A549 (cell line): ENCODE measurements at regions of chr17 and their contacts with region 1.

Region 1: DNA sequence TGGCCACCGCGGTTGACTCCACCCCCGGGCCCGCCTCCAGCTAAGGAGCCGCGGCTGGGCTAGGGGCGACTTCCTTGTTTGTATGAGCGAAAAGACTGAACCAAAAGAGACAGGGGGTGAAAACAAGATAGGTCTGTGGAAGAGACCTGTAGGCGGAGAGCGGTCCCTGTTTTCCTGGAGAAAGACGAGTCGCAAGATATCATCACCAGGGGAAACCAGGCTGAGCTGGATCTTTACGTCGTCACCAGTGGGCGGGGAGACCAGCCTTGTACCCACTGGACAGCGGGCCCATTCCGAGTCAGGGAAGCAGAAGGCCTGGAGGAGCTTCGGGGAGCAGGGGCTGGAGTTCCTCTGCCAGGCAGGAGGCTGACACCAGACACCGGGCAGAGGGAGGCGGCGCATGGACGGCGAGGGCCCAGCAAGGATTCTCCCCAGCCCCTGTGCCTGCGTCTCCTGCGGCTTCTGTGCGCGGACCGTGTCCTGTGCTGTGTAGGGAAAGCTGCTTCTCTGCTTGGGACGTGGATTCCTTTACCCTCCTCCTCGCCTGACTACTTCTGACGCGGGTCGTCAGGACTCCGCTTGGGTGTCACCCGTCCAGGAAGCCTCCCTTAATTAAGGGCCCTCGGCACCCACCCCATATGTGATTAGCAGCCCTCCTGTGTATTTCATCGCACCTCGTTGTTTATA is 10.3 kb upstream of the ARL4D start:
- DNase-seq: peak; percentile 87 to 95
- ATAC-seq: peak; percentile 92
- H3K4me3 ChIP-seq: peak overlapping the region; percentile 67
- H3K27ac ChIP-seq: peak overlapping the region; percentile 83 to 93
- H3K4me1 ChIP-seq: peaks cover 11% of the 10 kb centered on the region
- CTCF ChIP-seq: no peak
- EP300 ChIP-seq: no peak
- POLR2A ChIP-seq: peak; percentile 94
- RAD21 ChIP-seq: no peak

Region 2: DNA sequence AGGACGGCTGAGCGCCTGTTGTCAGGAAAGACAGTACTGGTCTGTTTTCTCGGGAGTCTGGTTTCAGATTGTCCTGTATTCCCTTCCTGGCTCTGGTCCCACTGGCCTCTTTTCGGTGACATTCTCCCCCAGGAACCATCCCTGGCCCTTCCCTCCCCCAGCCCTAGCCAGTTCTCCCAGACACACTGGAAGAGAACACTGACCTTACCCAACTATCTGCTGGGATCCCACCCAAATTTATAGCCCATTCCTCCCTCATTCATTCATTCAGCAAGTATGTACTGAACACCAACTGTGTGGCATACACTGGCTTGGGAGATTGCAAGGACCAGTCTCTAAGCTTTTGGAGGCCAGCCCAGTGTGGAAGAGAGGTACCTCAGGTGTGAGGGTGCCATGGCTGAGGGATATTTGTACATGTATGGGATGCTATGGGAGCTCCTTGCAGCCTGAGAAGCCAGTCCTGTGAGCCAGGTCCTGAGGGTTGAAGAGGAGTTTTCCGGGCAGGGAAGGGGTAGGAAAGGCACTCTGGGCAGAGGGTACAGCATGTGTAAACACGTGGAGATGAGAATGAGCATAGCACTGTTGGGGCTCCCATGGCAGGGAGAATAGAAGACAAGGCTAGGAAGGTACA is 358.2 kb before region 1 on chr17:
- CTCF ChIA-PET with region 1: no interaction called
- POLR2A ChIA-PET with region 1: no interaction called
- DNase-seq: no peak
- ATAC-seq: no peak
- H3K4me3 ChIP-seq: no peak overlapping the region
- H3K27ac ChIP-seq: 0 out of 6 replicates have a peak overlapping the region, but pooled peaks of 1 of the 2 experiments have one; percentile 7
- H3K4me1 ChIP-seq: peaks cover 7% of the 10 kb centered on the region; the same call in 2 of the 3 replicates
- CTCF ChIP-seq: no peak
- EP300 ChIP-seq: no peak
- POLR2A ChIP-seq: no peak
- RAD21 ChIP-seq: no peak

Region 3: GRCh38 chr17:43211480-43212402 is 176.8 kb before region 1 on chr17 and contains the start of gene TMEM106A:
- CTCF ChIA-PET with region 1: no interaction called
- POLR2A ChIA-PET with region 1: no interaction called
- DNase-seq: peak; percentile 84 to 97
- ATAC-seq: peak; percentile 90 to 92
- H3K4me3 ChIP-seq: peak within 1 kb of the TSS; percentile 51
- H3K27ac ChIP-seq: peak within 1 kb of the TSS; percentile 75 to 84
- H3K4me1 ChIP-seq: peaks cover 14% of the 10 kb centered on the region
- CTCF ChIP-seq: no peak
- EP300 ChIP-seq: no peak
- POLR2A ChIP-seq: peak; percentile 47
- RAD21 ChIP-seq: 0 out of 5 replicates have a peak, but pooled peaks of 1 of the 2 experiments have one; percentile 16
- polyA plus RNA-seq, gene TMEM106A: 2.6 and 3.5 TPM in 2 replicates

Region 4: DNA sequence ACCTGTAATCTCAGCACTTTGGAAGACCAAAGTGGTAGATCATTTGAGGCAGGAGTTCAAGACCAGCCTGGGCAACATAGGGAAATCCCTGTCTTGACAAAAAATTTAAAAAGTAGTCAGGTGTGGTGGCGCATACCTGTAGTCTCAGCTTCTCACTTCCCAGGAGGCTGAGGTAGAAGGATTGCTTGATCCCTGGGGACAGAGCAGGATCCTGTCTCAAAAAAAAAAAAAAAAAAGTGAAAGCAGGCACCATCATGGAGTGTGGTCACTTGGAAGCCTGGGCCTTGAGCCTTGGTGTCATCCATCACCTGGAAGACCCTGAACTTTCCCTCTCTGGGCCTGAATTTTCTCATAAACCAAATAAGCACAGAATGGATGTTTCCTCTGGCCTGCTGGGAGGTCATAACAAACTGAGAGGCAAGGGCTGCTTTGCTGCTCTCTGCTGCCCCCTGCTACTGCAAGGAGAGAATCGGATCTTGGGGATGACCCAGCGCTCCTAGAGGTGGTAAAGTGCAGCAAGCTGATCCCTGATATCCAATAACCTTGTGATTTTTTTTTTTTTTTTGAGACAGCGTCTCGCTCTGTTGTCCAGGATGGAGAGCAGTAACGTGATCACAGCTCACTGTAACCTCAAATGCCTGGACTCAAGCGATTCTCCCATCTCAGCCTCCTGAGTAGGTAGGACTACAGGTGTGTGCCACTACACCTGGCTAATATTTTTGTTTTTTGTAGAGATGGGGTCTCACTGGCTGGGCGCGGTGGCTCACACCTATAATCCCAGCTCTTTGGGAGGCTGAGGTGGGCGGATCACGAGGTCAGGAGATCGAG is 78.8 kb before region 1 on chr17:
- CTCF ChIA-PET with region 1: no interaction called
- POLR2A ChIA-PET with region 1: no interaction called
- DNase-seq: peak in 1 of 2 experiments; percentile 58
- ATAC-seq: no peak
- H3K4me3 ChIP-seq: no peak overlapping the region
- H3K27ac ChIP-seq: no peak overlapping the region; a peak in 1 of 6 replicates
- H3K4me1 ChIP-seq: no peaks in the 10 kb centered on the region; the same call in 1 of the 3 replicates
- CTCF ChIP-seq: no peak
- EP300 ChIP-seq: no peak
- POLR2A ChIP-seq: no peak
- RAD21 ChIP-seq: no peak

Region 5: DNA sequence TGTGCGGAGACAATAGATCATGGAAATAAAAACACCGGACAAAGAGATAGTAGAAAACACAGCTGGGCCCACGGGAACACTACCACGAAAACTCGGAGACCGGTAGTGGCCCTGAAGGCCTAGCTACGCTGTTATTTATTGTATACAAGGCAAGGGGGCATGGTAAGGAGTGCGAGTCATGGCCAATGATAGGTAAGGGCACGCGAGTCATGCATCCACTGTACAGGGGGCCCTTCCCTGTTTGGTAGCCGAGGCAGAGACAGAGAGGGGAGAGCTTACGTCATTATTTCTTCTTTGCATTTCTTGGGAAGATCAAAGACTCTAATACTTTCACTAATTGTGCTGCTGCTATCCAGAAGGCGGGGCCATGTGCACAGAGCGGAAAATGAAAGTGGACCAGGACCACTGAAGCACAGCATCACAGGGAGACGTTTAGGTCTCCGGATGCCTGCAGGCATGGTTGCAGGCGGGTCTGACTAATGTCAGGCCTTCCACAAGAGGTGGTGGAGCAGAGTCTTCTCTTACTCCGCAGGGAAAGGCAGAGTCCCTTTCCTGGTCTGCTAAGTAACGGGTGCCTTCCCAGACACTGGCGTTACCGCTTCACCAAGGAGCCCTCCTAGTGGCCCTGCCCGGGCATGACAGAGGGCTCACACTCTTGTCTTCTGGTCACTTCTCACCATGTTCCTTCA is 64.2 kb before region 1 on chr17:
- CTCF ChIA-PET with region 1: no interaction called
- POLR2A ChIA-PET with region 1: no interaction called
- DNase-seq: peak in 1 of 2 experiments; percentile 58
- ATAC-seq: peak; percentile 30 to 83; a peak in 4 of 6 replicates
- H3K4me3 ChIP-seq: no peak overlapping the region
- H3K27ac ChIP-seq: no peak overlapping the region
- H3K4me1 ChIP-seq: no peaks in the 10 kb centered on the region
- CTCF ChIP-seq: no peak
- EP300 ChIP-seq: no peak
- POLR2A ChIP-seq: no peak
- RAD21 ChIP-seq: no peak

Region 6: DNA sequence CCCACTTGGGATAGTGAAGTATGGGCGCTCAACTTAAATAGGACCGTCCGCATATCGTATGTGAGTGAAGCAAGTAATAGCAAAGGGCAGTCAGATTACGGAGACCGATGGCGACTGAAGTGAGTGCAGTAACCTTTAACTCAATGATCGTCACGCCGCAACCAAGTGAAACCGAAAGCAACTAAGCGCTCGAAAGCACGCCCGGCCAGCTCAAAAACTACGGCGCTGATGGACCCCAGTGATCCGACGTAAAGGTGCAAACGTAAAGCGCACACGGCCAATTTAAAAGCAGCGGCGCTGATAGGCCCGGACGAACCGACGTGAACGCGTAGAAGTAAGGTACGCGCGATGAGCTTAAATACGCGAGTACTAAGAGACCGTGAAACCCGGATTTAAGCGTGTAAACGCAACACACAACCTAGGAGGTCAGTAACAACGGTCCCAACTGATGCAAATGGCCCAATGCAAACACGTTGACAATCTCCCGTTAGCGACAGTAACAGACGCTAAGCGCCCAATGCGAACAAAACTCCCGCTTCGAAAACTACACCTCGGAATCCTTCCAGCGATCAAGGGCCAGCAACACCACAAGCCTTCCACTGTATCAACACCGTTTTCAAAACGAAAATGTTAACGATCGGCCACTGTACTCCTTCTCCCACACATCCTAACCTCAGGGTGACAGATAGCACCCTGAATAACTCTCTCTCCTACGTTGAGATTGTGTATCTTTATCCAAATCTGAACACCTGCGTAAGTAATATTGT is 27.6 kb before region 1 on chr17:
- CTCF ChIA-PET with region 1: interaction called, 5 read pairs
- POLR2A ChIA-PET with region 1: interaction called, 98 read pairs
- DNase-seq: peak; percentile 98 to 100
- ATAC-seq: peak; percentile 87 to 92
- H3K4me3 ChIP-seq: peak overlapping the region; percentile 62
- H3K27ac ChIP-seq: peak overlapping the region; percentile 88 to 91
- H3K4me1 ChIP-seq: peaks cover 28% of the 10 kb centered on the region
- CTCF ChIP-seq: no peak
- EP300 ChIP-seq: peak in 1 of 2 experiments; percentile 46; a peak in 2 of 5 replicates
- POLR2A ChIP-seq: peak; percentile 100
- RAD21 ChIP-seq: peak in 1 of 2 experiments; percentile 32; a peak in 1 of 5 replicates

Region 7: DNA sequence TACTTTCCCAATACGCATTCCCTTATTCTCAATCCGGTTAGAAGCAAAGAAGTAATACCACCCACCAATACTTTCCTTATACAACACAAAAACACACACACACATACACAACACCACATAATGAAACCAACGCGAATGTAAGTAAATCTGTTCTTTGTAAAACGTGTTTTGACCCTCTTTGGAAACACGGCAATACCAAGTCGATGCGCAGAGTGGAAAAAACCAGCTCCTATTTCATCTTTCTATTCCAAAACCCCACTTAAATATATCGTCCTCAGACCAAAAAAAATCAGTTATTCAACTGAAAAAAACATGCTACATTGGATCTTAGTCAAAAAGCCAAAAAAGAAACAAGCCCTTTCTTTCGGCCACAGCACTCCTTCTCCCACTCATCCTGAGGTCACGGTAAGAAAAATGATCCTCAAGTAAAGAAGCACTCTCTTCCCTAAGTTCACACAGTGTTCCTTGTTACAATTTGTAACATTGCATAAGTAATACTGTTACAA is 20.7 kb before region 1 on chr17:
- CTCF ChIA-PET with region 1: interaction called, 53 read pairs
- POLR2A ChIA-PET with region 1: interaction called, 212 read pairs
- DNase-seq: peak; percentile 90 to 92
- ATAC-seq: peak; percentile 70 to 74
- H3K4me3 ChIP-seq: peak overlapping the region; percentile 44; the same call in 2 of the 3 replicates
- H3K27ac ChIP-seq: peak overlapping the region; percentile 94
- H3K4me1 ChIP-seq: peaks cover 22% of the 10 kb centered on the region
- CTCF ChIP-seq: no peak
- EP300 ChIP-seq: no peak
- POLR2A ChIP-seq: peak; percentile 97
- RAD21 ChIP-seq: no peak; a peak in 1 of 5 replicates

Region 8: DNA sequence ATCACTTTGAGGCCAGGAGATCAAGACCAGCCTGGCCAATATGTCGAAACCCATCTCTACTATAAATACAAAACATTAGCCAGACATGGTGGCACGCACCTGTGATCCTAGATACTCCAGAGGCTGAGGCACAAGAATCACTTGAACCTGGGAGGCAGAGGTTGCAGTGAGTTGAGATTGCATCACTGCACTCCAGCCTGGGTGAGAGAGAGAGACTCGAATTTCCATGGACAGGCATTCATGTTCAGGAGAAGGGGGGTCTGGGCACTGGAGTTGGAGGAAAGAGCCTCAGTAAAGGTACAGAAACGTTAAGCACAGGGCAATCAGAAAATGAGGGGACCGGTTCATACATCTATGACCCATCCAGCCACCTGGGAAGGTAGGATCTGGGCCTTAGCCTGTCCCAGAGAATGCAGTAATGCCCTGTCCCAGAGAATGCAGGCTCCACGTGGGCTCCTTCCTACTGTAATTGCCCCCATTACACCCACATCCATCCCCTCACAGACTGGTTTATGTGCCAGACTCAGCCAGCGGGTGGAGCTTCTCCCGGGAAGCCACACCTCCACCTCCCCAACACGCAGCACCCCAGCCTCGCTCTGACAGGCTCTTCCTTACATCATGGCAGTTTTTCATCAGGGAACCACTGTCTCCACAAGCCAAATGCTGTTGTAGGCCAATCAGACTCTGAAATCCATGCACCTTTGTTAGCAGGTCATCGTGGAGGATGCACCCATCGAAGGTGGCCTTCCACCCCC is 11.3 kb before region 1 on chr17:
- CTCF ChIA-PET with region 1: interaction called, 28 read pairs
- POLR2A ChIA-PET with region 1: interaction called, 11 read pairs
- DNase-seq: no peak
- ATAC-seq: peak; percentile 27 to 40; a peak in 4 of 6 replicates
- H3K4me3 ChIP-seq: no peak overlapping the region
- H3K27ac ChIP-seq: no peak overlapping the region
- H3K4me1 ChIP-seq: no peaks in the 10 kb centered on the region
- CTCF ChIP-seq: no peak
- EP300 ChIP-seq: no peak
- POLR2A ChIP-seq: no peak
- RAD21 ChIP-seq: no peak

Region 9: GRCh38 chr17:43400943-43401692 is 12.6 kb after region 1 on chr17:
- CTCF ChIA-PET with region 1: interaction called, 386 read pairs
- POLR2A ChIA-PET with region 1: interaction called, 38 read pairs
- DNase-seq: peak; percentile 75 to 81
- ATAC-seq: peak; percentile 65 to 66
- H3K4me3 ChIP-seq: peak overlapping the region; percentile 71; the same call in 2 of the 3 replicates
- H3K27ac ChIP-seq: peak overlapping the region; percentile 52 to 95
- H3K4me1 ChIP-seq: peaks cover 35% of the 10 kb centered on the region
- CTCF ChIP-seq: no peak
- EP300 ChIP-seq: no peak
- POLR2A ChIP-seq: no peak
- RAD21 ChIP-seq: no peak

Region 10: GRCh38 chr17:43418441-43419374 is 30.2 kb after region 1 on chr17:
- CTCF ChIA-PET with region 1: interaction called, 386 read pairs
- POLR2A ChIA-PET with region 1: interaction called, 13 read pairs
- DNase-seq: peak; percentile 88 to 97
- ATAC-seq: peak; percentile 98 to 99
- H3K4me3 ChIP-seq: no peak overlapping the region
- H3K27ac ChIP-seq: peak overlapping the region; percentile 81 to 85
- H3K4me1 ChIP-seq: peaks cover 36% of the 10 kb centered on the region
- CTCF ChIP-seq: 0 out of 3 replicates have a peak, but pooled peaks have one; percentile 8
- EP300 ChIP-seq: no peak
- POLR2A ChIP-seq: peak; percentile 37
- RAD21 ChIP-seq: peak; percentile 47 to 51; a peak in 4 of 5 replicates